ENCODE measurements at regions of chr11 and their contacts with region 1.

Region 1: GRCh38 chr11:32326522-32326921 is 108.8 kb downstream of the WT1 start:
- DNase-seq: no peak
- ATAC-seq: no peak
- H3K4me3 ChIP-seq: no peak overlapping the region
- H3K4me1 ChIP-seq: no peaks in the 10 kb centered on the region
- CTCF ChIP-seq: no peak

Region 2: DNA sequence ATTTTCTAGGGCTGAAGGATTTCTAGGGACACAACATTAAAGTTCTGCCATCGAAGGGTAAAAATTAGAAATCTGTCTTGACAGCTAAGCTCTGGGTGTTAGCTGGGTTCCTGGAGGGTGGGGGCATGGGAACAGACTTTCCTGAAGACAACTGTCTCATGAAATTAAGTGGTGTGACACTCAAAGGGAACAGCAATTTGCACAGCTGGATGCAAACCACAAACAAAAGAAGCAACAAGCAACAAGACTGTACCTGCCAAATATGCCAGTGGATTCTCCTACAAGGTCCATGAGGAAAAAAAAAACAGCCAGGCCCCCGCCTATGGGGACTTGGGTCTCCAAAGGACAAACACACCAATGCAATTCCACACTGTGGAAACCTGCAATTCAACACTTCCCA is 76.3 kb after region 1 on chr11:
- intact Hi-C with region 1: no loop called
- DNase-seq: no peak
- ATAC-seq: no peak
- H3K4me3 ChIP-seq: no peak overlapping the region
- H3K4me1 ChIP-seq: no peaks in the 10 kb centered on the region
- CTCF ChIP-seq: no peak

Region 3: GRCh38 chr11:32466279-32466915 is 139.9 kb after region 1 on chr11:
- intact Hi-C with region 1: no loop called
- DNase-seq: no peak
- ATAC-seq: peak; percentile 79
- H3K4me3 ChIP-seq: no peak overlapping the region
- H3K4me1 ChIP-seq: no peaks in the 10 kb centered on the region
- CTCF ChIP-seq: no peak

Region 4: DNA sequence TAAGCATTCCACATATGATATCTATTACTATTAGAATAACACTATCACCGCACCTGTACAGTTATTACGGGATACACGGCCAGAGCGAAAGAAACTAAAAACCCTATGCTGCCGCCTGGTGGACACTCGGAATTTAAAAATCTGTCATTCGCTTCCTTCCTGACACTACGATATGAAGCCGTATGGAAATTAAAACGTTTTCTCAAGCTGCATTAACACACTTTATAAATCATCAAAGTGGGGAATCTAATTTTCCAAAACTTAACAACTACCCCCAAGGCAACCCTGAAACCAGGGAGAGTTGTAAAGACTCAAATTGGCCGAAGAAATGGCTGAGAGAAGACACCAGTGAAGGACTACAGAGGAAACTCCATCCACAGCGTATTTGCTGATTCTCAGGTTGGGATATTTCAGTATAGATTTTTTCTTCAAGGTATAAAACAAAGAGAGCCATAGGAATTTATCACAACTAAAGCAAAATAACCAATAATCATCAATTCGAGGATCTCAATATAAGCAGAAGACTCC is 466.5 kb after region 1 on chr11:
- intact Hi-C with region 1: loop called in 1 of 2 experiments (anchors 10 kb)
- DNase-seq: peak in 2 of 3 donors; percentile 49 to 84
- ATAC-seq: peak; percentile 77
- H3K4me3 ChIP-seq: no peak overlapping the region
- H3K4me1 ChIP-seq: no peaks in the 10 kb centered on the region
- CTCF ChIP-seq: no peak